K562 (cell line): ENCODE measurements at regions of chr16 and their contacts with region 1.

Region 1: GRCh38 chr16:78770353-78771091 is 671.1 kb downstream of the WWOX start:
- DNase-seq: peak; percentile 78 to 97 (median 91)
- ATAC-seq: peak; percentile 99
- H3K4me3 ChIP-seq: no peak overlapping the region
- H3K27ac ChIP-seq: no peak overlapping the region
- H3K4me1 ChIP-seq: no peaks in the 10 kb centered on the region
- H3K27me3 ChIP-seq: peaks cover 0 to 8% of the 10 kb centered on the region in 2 experiments; a peak in 1 of 5 replicates
- CTCF ChIP-seq: peak; percentile 84 to 87 (median 86)
- EP300 ChIP-seq: no peak
- POLR2A ChIP-seq: no peak
- RAD21 ChIP-seq: peak; percentile 59 to 61

Region 2: GRCh38 chr16:78122774-78123315 is 647.7 kb before region 1 on chr16:
- CTCF ChIA-PET with region 1: no interaction called
- POLR2A ChIA-PET with region 1: no interaction called
- in situ Hi-C with region 1: no loop called
- intact Hi-C with region 1: loop called (anchors 5 kb)
- DNase-seq: peak; percentile 26 to 37 (median 32)
- ATAC-seq: peak; percentile 90
- H3K4me3 ChIP-seq: no peak overlapping the region
- H3K27ac ChIP-seq: no peak overlapping the region
- H3K4me1 ChIP-seq: no peaks in the 10 kb centered on the region
- H3K27me3 ChIP-seq: no peaks in the 10 kb centered on the region
- CTCF ChIP-seq: peak in 2 of 3 experiments; percentile 34 to 64; a peak in 3 of 6 replicates
- EP300 ChIP-seq: no peak
- POLR2A ChIP-seq: no peak
- RAD21 ChIP-seq: peak; percentile 56 to 60

Region 3: DNA sequence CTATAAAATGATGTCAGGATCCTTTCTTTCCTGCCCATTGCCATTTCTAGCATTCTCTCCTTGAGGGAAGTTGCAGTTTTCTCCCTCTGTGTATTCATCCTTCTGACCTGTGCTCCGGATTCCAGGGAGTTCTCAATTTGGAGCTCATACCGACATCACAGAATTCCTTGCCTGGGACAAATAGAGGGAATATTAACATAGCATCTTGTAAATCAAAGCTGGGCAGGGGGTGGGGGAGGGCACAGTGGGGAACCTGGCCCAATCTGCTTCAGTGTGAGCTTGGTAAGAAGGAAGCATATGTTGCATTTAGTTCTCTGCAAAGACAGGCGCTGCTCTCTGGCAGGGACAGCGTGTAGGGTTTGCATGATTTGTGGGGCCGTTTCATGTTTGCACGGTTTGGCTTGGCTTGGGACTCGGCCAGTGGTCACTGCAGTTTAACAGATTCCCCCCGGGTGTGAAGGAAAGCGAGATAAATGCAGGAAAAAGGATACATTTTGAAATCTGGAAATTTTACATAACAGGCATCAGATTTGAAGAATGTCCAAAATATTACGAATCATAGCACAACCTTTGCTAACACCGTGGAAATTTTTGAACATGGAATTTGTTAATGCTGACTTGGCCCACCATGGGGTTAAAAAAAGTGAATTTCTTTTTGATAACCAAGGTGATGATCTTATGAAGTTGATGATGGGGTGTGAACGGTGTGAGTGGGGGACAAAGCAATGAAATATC is 493.0 kb before region 1 on chr16:
- CTCF ChIA-PET with region 1: no interaction called
- POLR2A ChIA-PET with region 1: no interaction called
- in situ Hi-C with region 1: no loop called
- intact Hi-C with region 1: no loop called
- DNase-seq: no peak
- ATAC-seq: no peak
- H3K4me3 ChIP-seq: no peak overlapping the region
- H3K27ac ChIP-seq: no peak overlapping the region
- H3K4me1 ChIP-seq: no peaks in the 10 kb centered on the region
- H3K27me3 ChIP-seq: peaks cover 18 to 32% of the 10 kb centered on the region in 2 experiments; a peak in 4 of 5 replicates
- CTCF ChIP-seq: no peak
- EP300 ChIP-seq: no peak
- POLR2A ChIP-seq: no peak
- RAD21 ChIP-seq: no peak

Region 4: DNA sequence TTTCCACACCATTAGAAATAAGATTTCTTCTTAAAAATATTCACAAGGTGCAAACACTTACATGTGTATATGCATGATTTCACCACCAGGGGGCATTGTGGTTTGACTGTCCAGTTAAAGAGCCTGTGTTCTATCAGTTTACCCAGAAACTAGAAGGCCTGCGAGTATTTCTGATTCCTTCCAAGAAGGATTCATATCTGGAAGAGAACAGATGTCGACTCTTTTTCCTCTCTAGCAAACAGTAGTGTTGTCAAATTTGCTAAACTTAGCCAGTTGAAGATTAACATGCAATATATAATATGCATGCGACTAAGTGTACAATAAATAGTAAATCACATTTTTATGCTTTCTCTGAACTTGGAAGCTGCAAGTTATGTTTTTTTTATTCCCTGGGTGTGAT is 266.9 kb before region 1 on chr16:
- CTCF ChIA-PET with region 1: interaction called, 6 read pairs
- POLR2A ChIA-PET with region 1: no interaction called
- in situ Hi-C with region 1: no loop called
- intact Hi-C with region 1: loop called (anchors 1 kb)
- DNase-seq: peak; percentile 52 to 74 (median 70)
- ATAC-seq: peak; percentile 70
- H3K4me3 ChIP-seq: no peak overlapping the region
- H3K27ac ChIP-seq: no peak overlapping the region
- H3K4me1 ChIP-seq: no peaks in the 10 kb centered on the region
- H3K27me3 ChIP-seq: peaks cover 23 to 42% of the 10 kb centered on the region in 2 experiments
- CTCF ChIP-seq: peak; percentile 61 to 74 (median 72); a peak in 5 of 6 replicates
- EP300 ChIP-seq: no peak
- POLR2A ChIP-seq: no peak
- RAD21 ChIP-seq: peak; percentile 57 to 61

Region 5: DNA sequence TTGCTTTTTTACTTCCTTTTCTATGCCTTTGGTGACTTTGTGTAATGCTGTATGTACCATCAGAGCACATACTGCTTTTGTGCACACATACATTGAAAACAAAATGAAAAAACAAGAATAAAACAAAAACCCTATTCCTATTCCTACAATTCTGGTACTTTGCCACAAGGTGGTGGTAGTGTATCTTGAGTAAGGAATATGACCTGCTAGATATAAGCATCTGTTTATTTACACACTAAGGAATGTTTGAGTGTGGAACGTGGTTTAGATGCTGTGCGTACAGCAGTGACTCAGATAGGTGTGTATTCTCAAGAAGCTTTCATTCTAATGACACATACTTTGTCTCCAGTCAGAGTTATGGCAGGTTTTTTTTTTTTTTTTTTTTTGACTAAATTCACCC is 64.8 kb before region 1 on chr16:
- CTCF ChIA-PET with region 1: interaction called, 5 read pairs
- POLR2A ChIA-PET with region 1: interaction called, 3 read pairs
- in situ Hi-C with region 1: no loop called
- intact Hi-C with region 1: loop called (anchors 5 kb)
- DNase-seq: peak; percentile 30 to 35 (median 34)
- ATAC-seq: no peak
- H3K4me3 ChIP-seq: no peak overlapping the region
- H3K27ac ChIP-seq: no peak overlapping the region
- H3K4me1 ChIP-seq: no peaks in the 10 kb centered on the region
- H3K27me3 ChIP-seq: peaks cover 2 to 11% of the 10 kb centered on the region in 2 experiments; a peak in 2 of 5 replicates
- CTCF ChIP-seq: peak; percentile 44 to 70 (median 45); a peak in 5 of 6 replicates
- EP300 ChIP-seq: no peak
- POLR2A ChIP-seq: no peak
- RAD21 ChIP-seq: peak; percentile 75 to 81